Activated B cell treated with CpG ODN at 0.5 μM for 24 hours (primary cell): ENCODE measurements at regions of chr22 and their contacts with region 1.

Region 1: GRCh38 chr22:16783930-16784354 is 41.3 kb downstream of the XKR3 start:
- DNase-seq: no peak
- ATAC-seq: no peak
- H3K4me3 Mint-ChIP-seq: no peak overlapping the region
- H3K27ac Mint-ChIP-seq: no peak overlapping the region
- H3K4me1 Mint-ChIP-seq: no peaks in the 10 kb centered on the region
- H3K27me3 Mint-ChIP-seq: peaks cover 4% of the 10 kb centered on the region
- CTCF ChIP-seq: no peak

Region 2: DNA sequence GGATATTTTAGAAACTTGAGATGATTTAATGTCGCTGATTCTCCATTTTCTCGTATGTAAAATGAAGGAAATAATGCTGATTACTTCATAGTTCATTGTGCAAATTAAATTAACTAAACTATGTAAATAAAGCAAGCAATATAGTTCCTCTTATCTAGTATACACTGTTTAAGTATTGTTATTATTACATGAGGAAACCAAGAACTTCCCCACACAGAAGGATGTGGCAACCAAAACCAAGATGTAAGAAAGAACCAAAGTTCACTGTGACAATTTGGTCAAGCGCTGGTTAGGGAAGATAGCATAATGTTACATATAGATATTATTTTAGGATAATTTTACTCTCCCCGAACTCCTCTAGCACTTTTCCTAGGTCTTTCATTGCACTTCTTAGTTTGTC is 62.0 kb before region 1 on chr22:
- CTCF ChIA-PET with region 1: no interaction called
- POLR2A ChIA-PET with region 1: no interaction called
- intact Hi-C with region 1: loop called (anchors 10 kb)
- DNase-seq: no peak
- ATAC-seq: no peak
- H3K4me3 Mint-ChIP-seq: no peak overlapping the region
- H3K27ac Mint-ChIP-seq: no peak overlapping the region
- H3K4me1 Mint-ChIP-seq: peaks cover 15% of the 10 kb centered on the region
- H3K27me3 Mint-ChIP-seq: peaks cover 8% of the 10 kb centered on the region
- CTCF ChIP-seq: no peak

Region 3: GRCh38 chr22:16810188-16810802 is 26.4 kb after region 1 on chr22:
- CTCF ChIA-PET with region 1: no interaction called
- POLR2A ChIA-PET with region 1: no interaction called
- intact Hi-C with region 1: no loop called
- DNase-seq: no peak
- ATAC-seq: no peak
- H3K4me3 Mint-ChIP-seq: no peak overlapping the region
- H3K27ac Mint-ChIP-seq: no peak overlapping the region
- H3K4me1 Mint-ChIP-seq: peaks cover 30% of the 10 kb centered on the region
- H3K27me3 Mint-ChIP-seq: no peaks in the 10 kb centered on the region
- CTCF ChIP-seq: no peak